WTC11 (cell line): ENCODE measurements at regions of chr15 and their contacts with region 1.

Region 1: GRCh38 chr15:52805351-52806283 is 15.5 kb upstream of the ONECUT1 start:
- DNase-seq: peak; percentile 61
- ATAC-seq: peak; percentile 41
- H3K4me3 Mint-ChIP-seq: peak overlapping the region; percentile 55
- H3K27ac Mint-ChIP-seq: no peak overlapping the region
- H3K4me1 Mint-ChIP-seq: peaks cover 61% of the 10 kb centered on the region
- H3K27me3 Mint-ChIP-seq: peaks cover 34% of the 10 kb centered on the region
- CTCF ChIP-seq: no peak

Region 2: GRCh38 chr15:52790162-52790708 is 15.4 kb before region 1 on chr15 and contains the start of gene ONECUT1:
- CTCF ChIA-PET with region 1: interaction called, 103 read pairs
- POLR2A ChIA-PET with region 1: interaction called, 38 read pairs
- DNase-seq: peak; percentile 76
- ATAC-seq: peak; percentile 10
- H3K4me3 Mint-ChIP-seq: peak within 1 kb of the TSS; percentile 81
- H3K27ac Mint-ChIP-seq: no peak within 1 kb of the TSS
- H3K4me1 Mint-ChIP-seq: peaks cover 79% of the 10 kb centered on the region
- H3K27me3 Mint-ChIP-seq: peaks cover 94% of the 10 kb centered on the region
- CTCF ChIP-seq: no peak
- total RNA-seq, gene ONECUT1: 33.8 to 39.3 TPM (median 35.9 TPM) in 3 replicates

Region 3: GRCh38 chr15:53197426-53197839 is 391.8 kb after region 1 on chr15:
- CTCF ChIA-PET with region 1: interaction called, 10 read pairs
- POLR2A ChIA-PET with region 1: interaction called, 3 read pairs
- DNase-seq: peak; percentile 84
- ATAC-seq: peak; percentile 99
- H3K4me3 Mint-ChIP-seq: peak overlapping the region; percentile 53
- H3K27ac Mint-ChIP-seq: no peak overlapping the region
- H3K4me1 Mint-ChIP-seq: peaks cover 19% of the 10 kb centered on the region
- H3K27me3 Mint-ChIP-seq: peaks cover 12% of the 10 kb centered on the region
- CTCF ChIP-seq: peak; percentile 94